Motor neuron (in vitro differentiated cells): ENCODE measurements at regions of chr9 and their contacts with region 1.

Region 1: DNA sequence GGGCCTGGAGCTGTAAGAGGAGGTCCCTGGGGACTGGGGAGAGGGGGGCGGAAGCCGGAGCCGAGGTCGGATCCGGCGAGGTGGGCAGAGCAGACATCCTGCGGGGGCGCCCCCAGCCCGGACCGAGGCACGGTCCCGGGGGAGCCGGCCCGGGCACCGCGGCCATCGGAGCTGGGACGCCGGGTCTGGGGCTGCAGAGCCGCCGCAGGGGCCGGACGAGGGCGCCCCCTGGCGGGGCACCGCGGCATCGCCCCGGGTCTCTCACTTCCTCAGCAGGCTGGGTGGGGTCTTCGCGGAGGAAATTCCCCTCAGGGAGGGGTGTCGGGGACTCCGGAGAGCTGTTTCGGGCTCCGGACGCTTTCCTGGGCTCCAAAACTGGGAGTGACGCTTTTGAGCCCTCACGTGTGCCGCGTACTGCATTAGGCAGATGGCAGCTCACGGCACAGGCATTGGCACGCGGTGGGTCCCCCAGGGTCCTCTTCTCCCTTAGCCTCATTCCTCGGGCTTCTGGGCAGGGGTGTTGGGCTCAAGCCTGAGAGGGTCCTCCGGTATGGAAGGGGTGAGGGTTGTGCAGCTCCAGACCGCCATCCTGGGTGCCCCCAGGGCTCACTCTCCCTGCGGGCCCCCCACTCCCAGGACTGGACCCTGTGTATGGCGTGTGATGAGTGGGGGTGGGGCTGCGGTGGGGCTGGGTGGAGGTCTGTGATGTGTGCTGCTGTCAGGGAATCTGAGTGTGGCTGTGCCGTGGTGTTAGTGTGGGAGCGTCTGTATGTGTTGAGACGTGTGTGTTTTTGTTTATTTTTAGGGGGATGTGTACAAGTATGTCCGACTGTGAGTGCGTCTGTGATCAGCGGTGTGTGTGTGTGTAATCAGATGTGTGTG is 29.6 kb downstream of the LHX2 start:
- ATAC-seq: peak; percentile 57 to 81 (median 74)
- H3K4me3 ChIP-seq: peak overlapping the region; percentile 21 to 32 (median 23)
- H3K27ac ChIP-seq: no peak overlapping the region
- H3K4me1 ChIP-seq: peaks cover 3 to 4% of the 10 kb centered on the region in 2 donors

Region 2: DNA sequence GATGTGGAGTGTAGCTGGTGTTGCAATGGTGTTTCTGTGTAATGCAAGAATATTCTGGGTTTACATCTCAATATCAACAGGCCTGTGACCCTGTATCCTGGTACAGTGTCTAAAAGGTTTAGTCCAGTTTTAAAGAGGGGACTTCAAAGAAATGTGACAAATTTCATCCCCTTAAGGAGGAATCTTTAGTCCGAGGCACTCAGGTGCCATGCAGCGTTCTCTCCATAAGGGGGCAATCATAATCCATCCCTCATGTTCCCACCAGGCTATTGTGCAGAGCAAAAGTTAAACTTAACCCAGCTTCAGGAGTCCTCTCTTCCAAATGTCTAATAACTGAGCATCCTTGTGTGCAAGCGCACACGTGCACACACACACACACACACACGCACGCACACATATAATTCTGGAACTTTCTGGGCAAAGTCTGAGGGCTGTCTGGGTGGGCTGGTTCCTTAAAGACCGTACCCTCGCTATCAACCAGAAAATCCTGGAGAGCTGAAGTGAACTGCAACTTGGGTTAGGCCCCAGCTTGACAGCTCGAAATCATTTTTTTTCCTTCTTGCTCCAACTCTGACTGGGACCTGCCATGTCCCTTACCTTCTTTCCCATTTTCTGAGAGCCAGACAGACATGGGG is 639.2 kb before region 1 on chr9:
- in situ Hi-C with region 1: loop called in 2 of 9 experiments (anchors 25 kb)
- ATAC-seq: peak; percentile 56 to 95 (median 68)
- H3K4me3 ChIP-seq: no peak overlapping the region
- H3K27ac ChIP-seq: no peak overlapping the region
- H3K4me1 ChIP-seq: peaks cover 25 to 26% of the 10 kb centered on the region in 2 donors

Region 3: GRCh38 chr9:123544007-123544827 is 497.0 kb before region 1 on chr9:
- in situ Hi-C with region 1: loop called in 2 of 9 experiments (anchors 25 kb)
- ATAC-seq: peak in 3 of 8 experiments; percentile 23 to 41 (median 37)
- H3K4me3 ChIP-seq: no peak overlapping the region
- H3K27ac ChIP-seq: no peak overlapping the region
- H3K4me1 ChIP-seq: peaks cover 12 to 16% of the 10 kb centered on the region in 2 donors

Region 4: GRCh38 chr9:123749580-123750202 is 291.5 kb before region 1 on chr9:
- in situ Hi-C with region 1: loop called in 1 of 9 experiments (anchors 25 kb)
- ATAC-seq: no peak
- H3K4me3 ChIP-seq: no peak overlapping the region
- H3K27ac ChIP-seq: no peak overlapping the region
- H3K4me1 ChIP-seq: no peaks in the 10 kb centered on the region

Region 5: GRCh38 chr9:123867034-123867433 is 174.1 kb before region 1 on chr9:
- in situ Hi-C with region 1: no loop called
- ATAC-seq: no peak
- H3K4me3 ChIP-seq: no peak overlapping the region
- H3K27ac ChIP-seq: no peak overlapping the region
- H3K4me1 ChIP-seq: peaks cover 0 to 12% of the 10 kb centered on the region in 2 donors

Region 6: GRCh38 chr9:124126571-124127289 is 85.6 kb after region 1 on chr9:
- in situ Hi-C with region 1: loop called in 1 of 9 experiments (anchors 25 kb)
- ATAC-seq: peak in 3 of 8 experiments; percentile 57 to 78 (median 58)
- H3K4me3 ChIP-seq: no peak overlapping the region
- H3K27ac ChIP-seq: no peak overlapping the region
- H3K4me1 ChIP-seq: peaks cover 0 to 4% of the 10 kb centered on the region in 2 donors